ENCODE measurements at regions of chr3 and their contacts with region 1.

Region 1: DNA sequence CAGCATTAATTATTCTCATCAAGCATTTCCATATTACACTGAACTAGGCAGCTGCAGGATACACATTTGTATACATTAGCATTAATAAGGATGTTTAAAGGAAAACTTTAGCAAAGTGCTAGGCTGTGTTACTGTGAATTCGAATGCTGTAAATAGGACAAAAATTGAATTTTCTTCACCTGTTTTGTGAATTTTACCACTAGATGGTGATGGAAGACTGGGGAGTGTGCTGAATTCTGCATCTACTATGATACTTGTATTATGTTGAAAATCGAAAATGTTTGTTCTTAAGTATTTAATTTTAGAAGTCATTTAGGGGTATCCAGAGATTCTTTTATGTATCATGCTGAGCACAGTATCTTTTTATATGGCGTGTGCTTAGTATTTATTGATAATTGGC is 12.3 kb upstream of the P2RY14 start:
- DNase-seq: peak; percentile 26
- ATAC-seq: no peak
- H3K4me3 ChIP-seq: no peak overlapping the region
- H3K4me3 Mint-ChIP-seq: no peak overlapping the region
- H3K27ac ChIP-seq: no peak overlapping the region
- H3K27ac Mint-ChIP-seq: no peak overlapping the region
- H3K4me1 ChIP-seq: no peaks in the 10 kb centered on the region
- H3K4me1 Mint-ChIP-seq: no peaks in the 10 kb centered on the region
- H3K27me3 ChIP-seq: no peaks in the 10 kb centered on the region
- H3K27me3 Mint-ChIP-seq: no peaks in the 10 kb centered on the region
- CTCF ChIP-seq: peak; percentile 62

Region 2: DNA sequence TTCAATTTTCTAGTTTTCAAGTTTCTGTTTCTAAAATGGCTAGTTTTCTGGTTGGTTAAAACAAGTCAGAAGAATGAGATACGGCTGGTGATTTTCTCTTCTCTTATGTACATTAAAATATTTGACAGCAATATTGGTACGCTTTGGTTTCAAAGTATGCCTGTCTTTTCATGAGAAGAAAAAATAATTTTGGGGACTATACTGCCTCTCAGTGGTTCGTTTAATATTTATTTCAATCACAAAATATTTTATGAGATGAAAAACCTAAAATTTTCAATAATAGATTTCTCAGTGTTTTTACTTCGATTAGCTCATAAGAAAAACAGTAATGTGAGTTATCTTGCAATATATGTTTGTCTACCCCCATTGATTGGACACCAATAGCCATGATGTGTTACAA is 370.2 kb after region 1 on chr3:
- CTCF ChIA-PET with region 1: no interaction called
- POLR2A ChIA-PET with region 1: no interaction called
- intact Hi-C with region 1: loop called (anchors 5 kb)
- DNase-seq: no peak
- ATAC-seq: no peak
- H3K4me3 ChIP-seq: no peak overlapping the region
- H3K4me3 Mint-ChIP-seq: no peak overlapping the region
- H3K27ac ChIP-seq: no peak overlapping the region
- H3K27ac Mint-ChIP-seq: no peak overlapping the region
- H3K4me1 ChIP-seq: no peaks in the 10 kb centered on the region
- H3K4me1 Mint-ChIP-seq: no peaks in the 10 kb centered on the region
- H3K27me3 ChIP-seq: no peaks in the 10 kb centered on the region
- H3K27me3 Mint-ChIP-seq: peaks cover 3% of the 10 kb centered on the region
- CTCF ChIP-seq: no peak

Region 3: DNA sequence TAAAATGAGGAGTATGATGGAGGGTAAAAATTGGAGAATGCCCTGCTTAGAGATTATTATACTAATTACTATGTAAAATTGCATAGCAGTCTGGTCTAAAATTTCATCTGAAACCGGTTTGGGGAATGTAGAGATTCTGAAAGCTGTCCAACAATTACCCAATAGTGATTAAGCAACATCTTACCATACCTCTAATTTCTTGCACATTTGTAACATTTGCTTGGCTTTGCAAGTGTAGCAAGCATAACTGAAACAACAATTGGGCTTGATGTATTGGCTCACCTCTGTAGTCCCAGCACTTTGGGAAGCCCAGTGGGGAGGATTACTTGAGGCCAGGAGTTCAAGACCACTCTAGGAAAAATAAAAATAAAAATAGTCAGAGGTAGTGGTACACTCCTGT is 460.5 kb after region 1 on chr3:
- CTCF ChIA-PET with region 1: no interaction called
- POLR2A ChIA-PET with region 1: no interaction called
- intact Hi-C with region 1: no loop called
- DNase-seq: no peak
- ATAC-seq: no peak
- H3K4me3 ChIP-seq: no peak overlapping the region
- H3K4me3 Mint-ChIP-seq: no peak overlapping the region
- H3K27ac ChIP-seq: no peak overlapping the region
- H3K27ac Mint-ChIP-seq: no peak overlapping the region
- H3K4me1 ChIP-seq: no peaks in the 10 kb centered on the region
- H3K4me1 Mint-ChIP-seq: no peaks in the 10 kb centered on the region
- H3K27me3 ChIP-seq: no peaks in the 10 kb centered on the region
- H3K27me3 Mint-ChIP-seq: peaks cover 3% of the 10 kb centered on the region
- CTCF ChIP-seq: no peak